Activated naive CD4-positive, alpha-beta T cell treated with anti-CD3 and anti-CD28 coated beads, Interleukin-2, amount 10 ng/mL, durations not matched to agents 7 days and 5 days (primary cell): ENCODE measurements at regions of chr11 and their contacts with region 1.

Region 1: GRCh38 chr11:35391922-35392813 is 27.2 kb downstream of the SLC1A2 start:
- DNase-seq: peak; percentile 89
- H3K4me3 Mint-ChIP-seq: no peak overlapping the region
- H3K27ac Mint-ChIP-seq: no peak overlapping the region
- H3K4me1 Mint-ChIP-seq: peaks cover 26% of the 10 kb centered on the region
- H3K27me3 Mint-ChIP-seq: peaks cover 28% of the 10 kb centered on the region

Region 2: GRCh38 chr11:34585735-34586487 is 806.3 kb before region 1 on chr11:
- CTCF ChIA-PET with region 1: interaction called, 12 read pairs
- DNase-seq: no peak
- H3K4me3 Mint-ChIP-seq: no peak overlapping the region
- H3K27ac Mint-ChIP-seq: no peak overlapping the region
- H3K4me1 Mint-ChIP-seq: no peaks in the 10 kb centered on the region
- H3K27me3 Mint-ChIP-seq: peaks cover 16% of the 10 kb centered on the region

Region 3: GRCh38 chr11:34999453-34999852 is 392.7 kb before region 1 on chr11:
- CTCF ChIA-PET with region 1: interaction called, 13 read pairs
- DNase-seq: no peak
- H3K4me3 Mint-ChIP-seq: no peak overlapping the region
- H3K27ac Mint-ChIP-seq: no peak overlapping the region
- H3K4me1 Mint-ChIP-seq: peaks cover 20% of the 10 kb centered on the region
- H3K27me3 Mint-ChIP-seq: no peaks in the 10 kb centered on the region